Activated CD4-positive, alpha-beta memory T cell treated with anti-CD3 and anti-CD28 coated beads for 36 hours (primary cell): ENCODE measurements at regions of chr1 and their contacts with region 1.

Region 1: DNA sequence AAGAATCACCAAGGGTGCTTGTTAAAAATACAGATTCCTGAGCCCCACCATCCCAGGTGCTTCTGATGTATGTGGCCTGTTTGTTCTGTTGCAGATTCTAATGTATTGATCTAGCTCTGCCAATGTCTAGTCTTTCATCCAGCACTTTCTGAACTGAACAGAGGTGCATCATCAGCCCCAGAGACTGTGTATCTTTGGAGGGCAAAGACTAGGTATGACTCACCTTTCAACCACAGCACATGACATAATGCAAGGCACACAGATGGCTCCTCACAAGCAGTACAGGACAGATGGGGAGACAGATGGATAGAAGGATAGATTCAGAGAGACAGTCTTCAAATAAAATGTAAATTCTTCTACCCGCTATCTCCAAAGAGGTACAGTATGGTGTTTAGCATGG is 32.3 kb downstream of the CD58 start:
- DNase-seq: peak; percentile 68
- H3K4me3 Mint-ChIP-seq: no peak overlapping the region
- H3K27ac Mint-ChIP-seq: peak overlapping the region; percentile 59
- H3K4me1 Mint-ChIP-seq: peaks cover 62% of the 10 kb centered on the region
- H3K27me3 Mint-ChIP-seq: no peaks in the 10 kb centered on the region

Region 2: DNA sequence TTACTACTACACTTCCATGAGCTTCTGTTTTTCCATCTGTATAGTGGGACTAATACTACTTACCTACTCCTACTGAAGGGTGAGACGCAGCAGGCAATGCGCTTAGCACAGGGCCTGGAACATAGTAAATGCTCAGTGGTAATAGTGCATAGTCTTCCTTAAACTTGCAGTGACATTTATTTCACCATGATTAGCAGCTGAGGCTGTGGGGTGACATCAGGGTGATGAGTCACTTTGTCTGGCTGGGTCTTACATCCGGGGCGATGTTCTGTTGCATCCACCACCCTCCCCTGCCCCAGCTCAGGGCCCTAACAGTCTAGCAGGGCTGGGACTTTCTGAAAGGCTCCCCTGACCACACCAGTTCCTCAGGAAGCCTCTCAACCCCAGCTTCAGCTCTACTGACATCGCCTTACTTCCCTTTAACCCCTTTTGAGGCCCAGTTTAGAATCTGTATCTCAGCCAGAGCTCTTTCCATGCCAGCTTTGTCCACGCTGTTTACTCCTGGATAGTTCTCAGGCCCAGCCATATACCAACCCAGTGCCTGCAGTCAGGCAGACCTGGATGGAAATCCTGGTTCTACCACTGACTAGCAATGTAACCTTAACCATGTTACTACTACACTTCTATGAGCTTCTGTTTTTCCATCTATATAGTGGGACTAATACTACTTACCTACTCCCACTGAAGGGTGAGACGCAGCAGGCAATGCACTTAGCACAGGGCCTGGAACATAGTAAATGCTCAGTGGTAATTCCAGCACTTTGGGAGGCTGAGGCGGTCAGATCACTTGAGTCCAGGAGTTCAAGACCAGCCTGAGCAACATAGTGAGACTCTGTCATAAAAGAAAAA is 34.0 kb before region 1 on chr1:
- CTCF ChIA-PET with region 1: no interaction called
- POLR2A ChIA-PET with region 1: interaction called, 3 read pairs
- intact Hi-C with region 1: loop called (anchors 1 kb)
- DNase-seq: peak; percentile 92
- H3K4me3 Mint-ChIP-seq: peak overlapping the region; percentile 38
- H3K27ac Mint-ChIP-seq: peak overlapping the region; percentile 97
- H3K4me1 Mint-ChIP-seq: peaks cover 65% of the 10 kb centered on the region
- H3K27me3 Mint-ChIP-seq: no peaks in the 10 kb centered on the region

Region 3: GRCh38 chr1:117290890-117291289 is 752.3 kb after region 1 on chr1:
- CTCF ChIA-PET with region 1: no interaction called
- POLR2A ChIA-PET with region 1: no interaction called
- intact Hi-C with region 1: no loop called
- DNase-seq: no peak
- H3K4me3 Mint-ChIP-seq: no peak overlapping the region
- H3K27ac Mint-ChIP-seq: no peak overlapping the region
- H3K4me1 Mint-ChIP-seq: no peaks in the 10 kb centered on the region
- H3K27me3 Mint-ChIP-seq: no peaks in the 10 kb centered on the region